ENCODE measurements at regions of chr3 and their contacts with region 1.

Region 1: DNA sequence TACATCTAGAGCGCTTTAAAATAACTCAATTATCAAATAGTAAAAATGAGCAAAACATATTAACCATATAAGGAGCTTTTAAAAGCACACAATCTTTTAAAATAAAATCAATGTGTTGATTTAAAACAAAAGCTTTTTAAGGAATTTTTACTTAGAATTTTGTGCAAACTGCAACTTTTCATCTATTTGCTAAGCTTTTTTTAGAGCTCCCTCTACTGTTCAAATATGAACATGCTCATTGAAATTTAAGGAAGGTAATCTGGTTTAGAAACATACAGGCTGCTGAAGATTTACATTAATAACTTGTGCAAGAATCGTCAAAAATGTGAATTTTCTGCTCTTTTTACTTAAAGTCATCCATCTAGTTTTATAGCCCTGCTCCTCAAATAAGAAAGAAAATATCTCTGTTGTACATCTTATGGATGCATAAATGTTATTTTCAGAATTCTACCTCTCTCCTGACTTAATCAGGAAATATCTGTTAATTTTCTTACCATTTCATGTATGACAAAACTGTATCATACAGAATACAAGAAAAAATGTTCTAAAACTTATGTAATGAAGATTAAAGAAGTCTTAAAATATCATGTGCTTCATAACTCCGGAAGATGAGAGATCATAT is 469.4 kb upstream of the ROBO2 start:
- DNase-seq: peak; percentile 48
- ATAC-seq: no peak
- H3K4me3 ChIP-seq: no peak overlapping the region
- H3K27ac ChIP-seq: no peak overlapping the region
- H3K4me1 ChIP-seq: peaks cover 3% of the 10 kb centered on the region; the same call in 1 of the 2 replicates
- H3K27me3 ChIP-seq: no peaks in the 10 kb centered on the region; the same call in 1 of the 2 replicates
- CTCF ChIP-seq: peak; percentile 69
- POLR2A ChIP-seq: no peak
- RAD21 ChIP-seq: peak; percentile 71

Region 2: GRCh38 chr3:75814797-75815196 is 755.8 kb before region 1 on chr3:
- CTCF ChIA-PET with region 1: no interaction called
- POLR2A ChIA-PET with region 1: no interaction called
- dilution Hi-C with region 1: no loop called
- in situ Hi-C with region 1: no loop called
- intact Hi-C with region 1: loop called (anchors 5 kb)
- DNase-seq: no peak
- ATAC-seq: no peak
- H3K4me3 ChIP-seq: no peak overlapping the region
- H3K27ac ChIP-seq: no peak overlapping the region
- H3K4me1 ChIP-seq: peaks cover 5% of the 10 kb centered on the region
- H3K27me3 ChIP-seq: no peaks in the 10 kb centered on the region
- CTCF ChIP-seq: no peak
- POLR2A ChIP-seq: no peak
- RAD21 ChIP-seq: no peak

Region 3: GRCh38 chr3:76024640-76025039 is 545.9 kb before region 1 on chr3:
- CTCF ChIA-PET with region 1: no interaction called
- POLR2A ChIA-PET with region 1: no interaction called
- dilution Hi-C with region 1: no loop called
- in situ Hi-C with region 1: no loop called
- intact Hi-C with region 1: loop called (anchors 5 kb)
- DNase-seq: peak; percentile 59
- ATAC-seq: peak; percentile 58; the same call in 1 of the 2 replicates
- H3K4me3 ChIP-seq: no peak overlapping the region
- H3K27ac ChIP-seq: no peak overlapping the region
- H3K4me1 ChIP-seq: peaks cover 7% of the 10 kb centered on the region
- H3K27me3 ChIP-seq: no peaks in the 10 kb centered on the region
- CTCF ChIP-seq: peak; percentile 63
- POLR2A ChIP-seq: no peak
- RAD21 ChIP-seq: peak; percentile 70

Region 4: GRCh38 chr3:76111808-76112207 is 458.7 kb before region 1 on chr3:
- CTCF ChIA-PET with region 1: no interaction called
- POLR2A ChIA-PET with region 1: no interaction called
- dilution Hi-C with region 1: no loop called
- in situ Hi-C with region 1: no loop called
- intact Hi-C with region 1: no loop called
- DNase-seq: no peak
- ATAC-seq: no peak
- H3K4me3 ChIP-seq: no peak overlapping the region
- H3K27ac ChIP-seq: no peak overlapping the region
- H3K4me1 ChIP-seq: no peaks in the 10 kb centered on the region
- H3K27me3 ChIP-seq: no peaks in the 10 kb centered on the region
- CTCF ChIP-seq: no peak
- POLR2A ChIP-seq: no peak
- RAD21 ChIP-seq: no peak

Region 5: GRCh38 chr3:76308541-76308940 is 262.0 kb before region 1 on chr3:
- CTCF ChIA-PET with region 1: interaction called, 3 read pairs
- POLR2A ChIA-PET with region 1: no interaction called
- dilution Hi-C with region 1: no loop called
- in situ Hi-C with region 1: no loop called
- intact Hi-C with region 1: loop called (anchors 1 kb)
- DNase-seq: peak; percentile 85
- ATAC-seq: peak; percentile 43
- H3K4me3 ChIP-seq: no peak overlapping the region
- H3K27ac ChIP-seq: peak overlapping the region; percentile 79; the same call in 1 of the 2 replicates
- H3K4me1 ChIP-seq: peaks cover 9% of the 10 kb centered on the region
- H3K27me3 ChIP-seq: no peaks in the 10 kb centered on the region
- CTCF ChIP-seq: no peak
- POLR2A ChIP-seq: no peak
- RAD21 ChIP-seq: no peak

Region 6: GRCh38 chr3:76369178-76369577 is 201.4 kb before region 1 on chr3:
- CTCF ChIA-PET with region 1: no interaction called
- POLR2A ChIA-PET with region 1: no interaction called
- dilution Hi-C with region 1: no loop called
- in situ Hi-C with region 1: no loop called
- intact Hi-C with region 1: loop called (anchors 2 kb)
- DNase-seq: peak; percentile 69
- ATAC-seq: peak; percentile 69
- H3K4me3 ChIP-seq: no peak overlapping the region
- H3K27ac ChIP-seq: no peak overlapping the region
- H3K4me1 ChIP-seq: no peaks in the 10 kb centered on the region; the same call in 1 of the 2 replicates
- H3K27me3 ChIP-seq: no peaks in the 10 kb centered on the region
- CTCF ChIP-seq: peak; percentile 68
- POLR2A ChIP-seq: no peak
- RAD21 ChIP-seq: peak; percentile 70

Region 7: DNA sequence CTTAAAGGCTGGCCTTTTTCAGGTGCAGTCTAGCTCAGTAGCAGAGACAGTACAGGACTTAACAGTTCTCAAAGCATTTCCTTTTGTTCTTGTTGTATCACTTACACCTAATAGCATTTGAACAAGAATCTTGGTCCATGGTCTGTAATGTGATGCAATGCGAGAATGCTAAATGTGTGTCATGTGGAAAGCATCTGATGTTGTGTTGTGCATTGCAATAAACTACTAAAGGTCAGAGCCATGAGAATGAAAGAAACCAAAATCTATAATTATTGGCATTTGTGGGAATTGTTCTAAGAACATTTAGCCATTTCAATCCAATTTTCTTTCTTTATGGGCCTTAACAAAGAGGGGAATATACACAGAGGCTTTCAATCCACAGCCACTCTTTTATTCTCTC is 144.9 kb after region 1 on chr3:
- CTCF ChIA-PET with region 1: no interaction called
- POLR2A ChIA-PET with region 1: no interaction called
- dilution Hi-C with region 1: no loop called
- in situ Hi-C with region 1: no loop called
- intact Hi-C with region 1: no loop called
- DNase-seq: peak; percentile 19
- ATAC-seq: no peak; the same call in 1 of the 2 replicates
- H3K4me3 ChIP-seq: no peak overlapping the region
- H3K27ac ChIP-seq: no peak overlapping the region
- H3K4me1 ChIP-seq: no peaks in the 10 kb centered on the region
- H3K27me3 ChIP-seq: no peaks in the 10 kb centered on the region
- CTCF ChIP-seq: no peak
- POLR2A ChIP-seq: no peak
- RAD21 ChIP-seq: no peak

Measured in IMR-90 (cell line).